CD8-positive, alpha-beta memory T cell (primary cell): ENCODE measurements at regions of chr19 and their contacts with region 1.

Region 1: DNA sequence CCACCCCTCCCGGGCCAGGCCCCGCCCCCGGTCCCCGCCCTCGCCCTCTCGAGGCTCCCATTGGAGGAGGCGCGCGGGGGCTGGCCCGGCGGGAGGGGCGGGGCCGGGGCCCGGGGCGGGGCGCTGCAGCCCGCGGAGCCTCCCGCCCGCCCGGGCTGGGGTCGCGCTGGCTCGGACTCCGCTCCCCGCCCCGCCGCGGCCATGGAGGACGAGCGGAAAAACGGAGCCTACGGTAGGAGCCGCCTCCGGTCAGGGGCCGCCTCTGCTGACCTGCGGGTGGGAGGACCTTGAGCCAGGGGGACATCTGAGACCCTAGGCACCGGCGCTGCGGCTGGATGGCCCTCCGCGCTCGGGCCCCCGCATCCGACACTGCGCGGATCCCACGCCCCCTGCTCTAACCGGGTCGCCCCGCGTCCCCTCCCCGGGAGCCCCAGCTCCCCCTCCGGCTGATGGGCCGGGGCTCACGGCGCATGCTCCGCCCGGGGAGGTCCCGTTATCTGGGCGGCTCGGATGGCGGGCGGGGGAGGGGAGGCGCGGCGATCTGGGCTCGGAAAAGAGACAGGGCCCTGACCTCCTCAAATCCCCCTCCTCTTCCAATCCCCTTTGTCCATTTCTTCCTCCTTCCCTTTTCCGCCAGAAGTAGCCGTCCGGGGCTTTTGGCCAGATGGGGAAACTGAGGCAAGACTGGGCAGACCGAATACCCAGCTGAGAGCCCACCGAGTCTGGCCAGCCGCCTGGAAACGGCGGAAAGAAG is 15.4 kb upstream of the AP1M2 start:
- DNase-seq: peak; percentile 79 to 90 (median 85)
- H3K4me3 ChIP-seq: peak overlapping the region; percentile 84
- H3K4me3 Mint-ChIP-seq: peak overlapping the region; percentile 97 to 99 (median 99)
- H3K27ac ChIP-seq: peak overlapping the region; percentile 89
- H3K27ac Mint-ChIP-seq: peak overlapping the region; percentile 78 to 99 (median 98)
- H3K4me1 ChIP-seq: peaks cover 22% of the 10 kb centered on the region
- H3K4me1 Mint-ChIP-seq: peaks cover 24 to 42% (median 29%) of the 10 kb centered on the region in 3 donors
- H3K27me3 ChIP-seq: no peaks in the 10 kb centered on the region
- H3K27me3 Mint-ChIP-seq: no peaks in the 10 kb centered on the region

Region 2: DNA sequence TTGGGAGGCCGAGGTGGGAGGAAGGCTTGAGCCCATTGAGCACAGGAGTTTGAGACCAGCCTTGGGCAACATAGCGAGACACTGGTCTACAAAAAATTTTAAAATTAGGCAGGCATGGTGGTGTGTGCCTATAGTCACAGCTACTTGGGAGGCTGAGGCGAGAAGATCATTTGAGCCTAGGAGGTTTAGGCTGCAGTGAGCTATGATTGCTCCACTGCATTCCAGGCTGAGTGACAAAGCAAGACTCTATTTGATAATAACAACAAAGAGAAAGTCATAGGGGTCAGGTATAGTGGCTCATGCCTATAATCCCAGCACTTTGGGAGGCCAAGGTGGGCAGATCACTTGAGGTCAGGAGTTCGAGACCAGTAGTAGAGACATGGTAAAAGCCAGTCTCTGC is 18.3 kb after region 1 on chr19:
- CTCF ChIA-PET with region 1: interaction called, 19 read pairs
- POLR2A ChIA-PET with region 1: interaction called, 4 read pairs
- DNase-seq: no peak
- H3K4me3 ChIP-seq: no peak overlapping the region
- H3K4me3 Mint-ChIP-seq: no peak overlapping the region
- H3K27ac ChIP-seq: no peak overlapping the region
- H3K27ac Mint-ChIP-seq: peak overlapping the region in 6 of 8 donors; percentile 13 to 80 (median 63)
- H3K4me1 ChIP-seq: peaks cover 38% of the 10 kb centered on the region
- H3K4me1 Mint-ChIP-seq: peaks cover 38 to 64% (median 59%) of the 10 kb centered on the region in 3 donors
- H3K27me3 ChIP-seq: no peaks in the 10 kb centered on the region
- H3K27me3 Mint-ChIP-seq: no peaks in the 10 kb centered on the region

Region 3: DNA sequence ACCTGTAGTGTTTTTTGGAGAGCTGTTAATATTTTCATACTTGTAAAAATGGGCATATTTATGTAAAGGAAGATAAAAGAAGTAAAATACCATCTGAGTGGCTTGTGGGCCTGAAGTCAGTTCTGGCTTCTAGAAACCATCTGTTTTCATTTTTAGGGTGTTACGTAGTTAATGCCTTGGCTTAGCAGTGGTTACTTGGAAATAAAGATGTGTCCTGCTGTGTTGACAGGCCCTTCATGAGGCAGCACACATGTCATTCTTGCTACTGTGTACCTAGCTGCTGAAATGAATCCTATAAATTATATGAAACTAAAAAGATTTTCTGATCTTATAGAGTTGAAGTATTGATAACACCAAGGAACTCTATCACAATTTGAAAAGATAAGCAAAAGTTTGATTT is 67.7 kb after region 1 on chr19:
- CTCF ChIA-PET with region 1: no interaction called
- POLR2A ChIA-PET with region 1: no interaction called
- DNase-seq: no peak
- H3K4me3 ChIP-seq: no peak overlapping the region
- H3K4me3 Mint-ChIP-seq: peak overlapping the region in 1 of 7 donors; percentile 44
- H3K27ac ChIP-seq: no peak overlapping the region
- H3K27ac Mint-ChIP-seq: peak overlapping the region in 4 of 8 donors; percentile 9 to 63 (median 29)
- H3K4me1 ChIP-seq: peaks cover 16% of the 10 kb centered on the region
- H3K4me1 Mint-ChIP-seq: peaks cover 44 to 53% (median 44%) of the 10 kb centered on the region in 3 donors
- H3K27me3 ChIP-seq: no peaks in the 10 kb centered on the region
- H3K27me3 Mint-ChIP-seq: peaks cover 0 to 4% of the 10 kb centered on the region in 2 donors